ENCODE measurements at regions of chr16 and their contacts with region 1.

Region 1: DNA sequence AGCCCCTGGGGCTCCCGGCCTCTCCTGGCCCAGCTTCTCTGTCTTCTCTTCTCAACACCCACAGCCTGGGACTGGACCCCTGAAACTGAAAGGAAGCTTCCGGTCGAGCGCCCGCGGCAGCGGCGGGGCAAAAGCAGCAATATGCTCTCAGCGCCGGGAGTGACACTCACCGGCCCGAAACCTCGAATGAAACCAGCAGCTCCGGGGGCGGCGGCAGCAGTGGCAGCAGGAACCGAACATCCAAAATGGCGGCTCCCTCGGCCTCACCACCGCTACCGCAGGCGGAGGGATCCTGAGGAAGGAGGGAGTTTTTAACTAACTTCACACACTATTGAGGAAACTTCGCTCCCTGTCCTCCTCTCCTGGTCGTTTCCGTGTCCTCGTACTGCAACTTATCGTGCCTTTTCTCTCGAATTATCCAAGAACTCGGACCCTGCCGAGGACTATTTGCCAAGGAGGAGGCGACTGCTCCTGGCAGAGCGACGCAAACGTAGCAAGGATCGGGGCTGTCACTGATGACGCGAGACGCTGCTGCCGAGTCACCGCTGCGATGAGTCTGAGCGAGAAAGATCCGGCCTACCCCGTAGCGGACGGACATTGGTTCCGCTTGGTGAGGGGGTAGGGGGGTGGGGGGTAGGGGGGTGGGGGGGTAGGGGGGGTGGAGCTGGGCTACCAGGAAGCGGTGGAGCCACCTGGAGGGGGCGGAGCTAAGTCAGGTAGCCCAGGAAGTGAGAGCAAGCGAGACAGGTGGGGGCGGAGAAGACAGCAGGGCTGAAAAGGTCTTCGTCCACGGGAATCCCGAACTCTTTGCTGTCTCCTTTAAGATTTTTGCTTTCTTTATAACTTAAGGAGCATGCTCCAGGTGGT is at the start of gene AP1G1:
- DNase-seq: peak; percentile 83 to 97 (median 95)
- H3K4me3 ChIP-seq: peak within 1 kb of the TSS; percentile 66 to 100 (median 99)
- H3K27ac ChIP-seq: peak within 1 kb of the TSS; percentile 87 to 99 (median 97)
- H3K27me3 ChIP-seq: no peaks in the 10 kb centered on the region
- CTCF ChIP-seq: peak in 13 of 56 donors; percentile 3 to 39 (median 21)
- total RNA-seq, gene AP1G1: 81.3 to 131 (median 109) TPM

Region 2: DNA sequence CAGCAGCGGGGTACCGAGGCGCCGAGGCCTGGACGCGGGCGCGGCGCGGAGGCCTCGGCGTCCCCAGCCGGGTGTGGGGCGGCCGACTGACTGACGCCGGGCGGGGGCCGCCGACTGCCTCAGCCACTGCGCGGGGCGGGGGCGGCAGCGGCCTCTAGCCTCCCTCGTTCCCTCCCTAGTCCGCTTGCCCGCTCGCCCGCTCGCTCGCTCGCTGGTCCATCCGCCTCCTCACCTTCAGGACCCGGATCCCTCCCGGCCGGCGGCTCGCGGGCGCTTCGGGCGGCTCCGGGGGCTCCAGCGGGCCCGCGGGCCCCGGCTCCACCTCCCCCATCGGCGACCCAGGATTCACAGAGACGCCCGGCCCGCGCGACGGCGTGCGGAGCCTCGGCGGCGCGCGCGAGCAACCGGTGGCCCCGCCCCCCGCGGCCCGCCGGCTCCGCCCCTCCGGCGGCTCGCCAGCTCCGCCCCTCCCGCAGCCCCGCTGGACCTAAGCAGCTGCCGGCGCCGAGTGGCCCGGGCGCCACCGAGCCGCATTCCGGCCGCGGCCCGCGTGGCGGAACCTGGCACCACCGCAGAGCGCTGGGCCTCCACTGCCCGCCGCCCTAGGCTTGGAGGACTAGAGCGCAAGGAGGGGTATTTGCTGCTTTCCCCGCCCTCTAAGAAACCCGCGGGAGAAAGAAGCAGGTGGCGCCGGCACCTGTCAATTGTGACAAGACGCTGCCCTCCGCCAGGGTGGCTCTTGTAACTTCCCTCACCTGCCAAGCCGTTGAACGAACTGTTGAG is 85.1 kb before region 1 on chr16:
- intact Hi-C with region 1: loop called in 1 of 2 experiments (anchors 10 kb)
- DNase-seq: peak; percentile 56 to 86 (median 74)
- H3K4me3 ChIP-seq: peak overlapping the region; percentile 59 to 98 (median 86)
- H3K27ac ChIP-seq: peak overlapping the region in 58 of 59 donors; percentile 46 to 94 (median 88)
- H3K27me3 ChIP-seq: no peaks in the 10 kb centered on the region
- CTCF ChIP-seq: peak in 19 of 56 donors; percentile 8 to 42 (median 27)

Region 3: GRCh38 chr16:71845639-71846430 is 37.0 kb after region 1 on chr16 and contains the start of gene ATXN1L:
- intact Hi-C with region 1: loop called (anchors 1 to 2 kb)
- DNase-seq: peak; percentile 73 to 97 (median 86)
- H3K4me3 ChIP-seq: peak within 1 kb of the TSS; percentile 69 to 100 (median 99)
- H3K27ac ChIP-seq: peak within 1 kb of the TSS; percentile 14 to 96 (median 85)
- H3K27me3 ChIP-seq: no peaks in the 10 kb centered on the region
- CTCF ChIP-seq: peak in 36 of 56 donors; percentile 14 to 56 (median 31)
- total RNA-seq, gene ATXN1L: 20.3 to 34.3 (median 26.3) TPM

Region 4: GRCh38 chr16:71961066-71962039 is 152.5 kb after region 1 on chr16:
- intact Hi-C with region 1: loop called in 1 of 2 experiments (anchors 10 kb)
- DNase-seq: peak; percentile 67 to 93 (median 87)
- H3K4me3 ChIP-seq: peak overlapping the region in 2 of 59 donors; percentile 6 to 9
- H3K27ac ChIP-seq: peak overlapping the region in 5 of 59 donors; percentile 6 to 55 (median 36)
- H3K27me3 ChIP-seq: no peaks in the 10 kb centered on the region
- CTCF ChIP-seq: peak; percentile 55 to 90 (median 82)

Region 5: GRCh38 chr16:72324578-72324977 is 515.8 kb after region 1 on chr16:
- intact Hi-C with region 1: no loop called
- DNase-seq: no peak
- H3K4me3 ChIP-seq: no peak overlapping the region
- H3K27ac ChIP-seq: no peak overlapping the region
- H3K27me3 ChIP-seq: no peaks in the 10 kb centered on the region
- CTCF ChIP-seq: no peak